Activated naive CD8-positive, alpha-beta T cell treated with anti-CD3 and anti-CD28 coated beads, Interleukin-2, amount 10 ng/mL, durations not matched to agents 7 days and 5 days (primary cell): ENCODE measurements at regions of chr14 and their contacts with region 1.

Region 1: DNA sequence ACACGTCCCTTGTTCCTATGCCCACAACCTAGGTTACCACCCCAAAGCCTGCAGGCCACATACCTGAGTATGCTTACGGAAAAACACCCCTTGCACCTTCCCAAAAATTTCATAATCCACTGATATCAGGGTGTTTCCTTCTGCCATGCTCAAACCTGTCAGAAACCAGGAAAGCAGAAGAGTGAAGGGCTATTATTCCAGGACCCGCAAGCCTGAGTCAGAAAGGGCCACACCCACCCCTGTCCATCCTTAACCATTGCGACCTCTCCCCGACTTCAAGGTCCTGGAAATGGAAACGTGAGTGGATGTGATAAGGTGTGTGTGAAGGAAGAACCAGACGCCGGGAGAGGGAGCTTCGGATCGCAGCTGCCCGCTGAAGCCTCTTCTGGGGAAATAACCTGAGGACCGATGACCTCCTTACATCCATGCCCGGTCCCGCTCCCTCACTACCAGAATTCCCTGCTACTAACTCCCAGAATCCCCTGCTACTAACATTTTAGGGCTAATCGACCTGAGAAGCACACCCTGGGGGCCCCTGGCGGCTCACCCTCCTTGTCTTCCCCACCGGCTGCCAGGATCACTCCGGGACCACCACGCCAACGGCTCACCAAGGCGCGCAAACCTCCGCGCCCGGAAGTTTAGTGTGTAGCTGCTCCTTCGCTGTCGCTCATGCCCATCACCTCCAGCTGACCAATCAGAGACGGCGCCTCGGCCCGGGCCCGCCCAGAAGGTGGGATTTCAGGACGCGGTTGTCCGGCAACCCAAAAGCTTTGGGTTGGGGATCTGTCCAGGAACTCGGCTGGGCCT is at the start of gene ACYP1:
- DNase-seq: peak; percentile 93
- ATAC-seq: peak; percentile 99
- H3K4me3 Mint-ChIP-seq: peak within 1 kb of the TSS; percentile 98
- H3K27ac Mint-ChIP-seq: peak within 1 kb of the TSS; percentile 94
- H3K4me1 Mint-ChIP-seq: peaks cover 29% of the 10 kb centered on the region
- H3K27me3 Mint-ChIP-seq: no peaks in the 10 kb centered on the region
- total RNA-seq, gene ACYP1: 50.7 to 54.7 TPM

Region 2: DNA sequence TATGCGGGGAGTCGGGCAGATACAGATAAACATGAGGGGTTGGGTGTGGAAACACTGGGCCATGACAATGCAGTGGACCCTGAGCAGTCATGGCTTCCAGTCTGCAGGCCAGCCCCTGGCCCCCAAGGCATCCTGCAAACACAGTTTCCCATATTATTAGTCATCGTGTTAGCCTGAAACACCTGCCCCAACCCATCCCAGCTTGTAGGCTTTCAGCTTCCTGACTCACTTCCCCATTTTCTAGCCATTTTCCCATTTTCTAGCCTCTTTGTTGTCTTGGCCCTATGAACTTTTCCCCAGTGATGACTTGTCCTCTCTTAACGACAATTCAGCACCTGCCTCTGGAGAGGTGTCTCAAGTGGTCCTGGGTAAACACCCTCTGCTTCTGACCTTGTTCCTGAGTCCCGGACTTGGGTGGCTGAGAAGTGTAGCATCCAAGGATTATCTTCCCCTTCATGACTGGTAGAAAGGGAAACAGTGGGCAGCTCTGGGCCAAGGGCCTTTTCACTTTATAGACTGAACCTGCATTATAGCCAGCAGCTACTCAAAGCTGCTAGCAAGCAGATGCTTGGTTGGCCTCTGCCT is 103.9 kb before region 1 on chr14:
- POLR2A ChIA-PET with region 1: no interaction called
- DNase-seq: no peak
- ATAC-seq: no peak
- H3K4me3 Mint-ChIP-seq: no peak overlapping the region
- H3K27ac Mint-ChIP-seq: no peak overlapping the region
- H3K4me1 Mint-ChIP-seq: peaks cover 10% of the 10 kb centered on the region
- H3K27me3 Mint-ChIP-seq: peaks cover 32% of the 10 kb centered on the region

Region 3: DNA sequence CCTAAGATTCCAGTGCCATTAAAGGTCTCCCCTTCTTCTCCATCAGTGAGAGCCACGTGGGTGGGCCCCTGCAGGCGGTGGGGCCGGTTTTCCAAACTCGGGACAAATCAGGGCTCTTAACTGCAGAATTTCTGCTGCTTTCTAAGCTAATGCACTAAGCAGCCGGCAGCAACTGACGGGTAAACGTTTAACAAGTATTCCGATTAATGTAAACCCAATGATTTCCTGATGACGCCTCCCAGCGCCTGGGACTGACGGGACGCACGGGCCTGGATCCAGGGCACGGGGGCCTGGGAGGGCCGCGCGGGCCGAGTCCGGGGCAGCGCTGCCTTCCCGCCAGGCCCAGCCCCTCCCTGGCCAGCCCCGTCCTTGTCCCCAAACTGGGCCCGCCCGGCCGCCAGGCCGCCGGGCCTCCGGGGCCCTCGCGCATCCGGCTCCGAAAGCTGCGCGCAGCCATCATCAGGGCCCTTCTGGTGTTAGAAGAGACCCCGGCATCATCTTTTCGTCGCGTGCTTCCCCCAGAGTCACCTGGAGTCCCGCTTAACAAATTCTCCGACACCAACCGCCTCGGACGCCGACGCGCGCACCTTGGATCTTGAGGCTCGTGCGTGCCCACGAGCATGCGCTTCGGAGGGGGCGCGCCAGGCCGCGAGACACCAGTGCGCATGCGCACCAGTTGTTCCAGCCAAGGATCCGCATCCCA is 12.6 kb before region 1 on chr14 and contains the start of gene MLH3:
- POLR2A ChIA-PET with region 1: interaction called, 17 read pairs
- DNase-seq: peak; percentile 85
- ATAC-seq: peak; percentile 79
- H3K4me3 Mint-ChIP-seq: peak within 1 kb of the TSS; percentile 90
- H3K27ac Mint-ChIP-seq: peak within 1 kb of the TSS; percentile 82
- H3K4me1 Mint-ChIP-seq: peaks cover 28% of the 10 kb centered on the region
- H3K27me3 Mint-ChIP-seq: no peaks in the 10 kb centered on the region
- total RNA-seq, gene MLH3: 18.0 to 18.2 TPM